ENCODE measurements at regions of chr2 and their contacts with region 1.

Region 1: GRCh38 chr2:157327621-157328500 is 2.2 kb upstream of the ERMN start:
- DNase-seq: peak; percentile 75 to 83 (median 78)
- H3K4me3 ChIP-seq: peak overlapping the region in 1 of 2 donors; percentile 13
- H3K4me3 Mint-ChIP-seq: peak overlapping the region in 7 of 8 donors; percentile 63 to 75 (median 70)
- H3K27ac ChIP-seq: no peak overlapping the region
- H3K27ac Mint-ChIP-seq: peak overlapping the region; percentile 27 to 91 (median 82)
- H3K4me1 ChIP-seq: peaks cover 42% of the 10 kb centered on the region
- H3K4me1 Mint-ChIP-seq: peaks cover 34 to 49% (median 40%) of the 10 kb centered on the region in 4 donors
- H3K27me3 ChIP-seq: no peaks in the 10 kb centered on the region
- H3K27me3 Mint-ChIP-seq: no peaks in the 10 kb centered on the region

Region 2: GRCh38 chr2:157261199-157261783 is 66.6 kb before region 1 on chr2:
- CTCF ChIA-PET with region 1: no interaction called
- POLR2A ChIA-PET with region 1: no interaction called
- intact Hi-C with region 1: no loop called
- DNase-seq: peak in 1 of 5 donors; percentile 34
- H3K4me3 ChIP-seq: no peak overlapping the region
- H3K4me3 Mint-ChIP-seq: peak overlapping the region in 7 of 8 donors; percentile 9 to 70 (median 42)
- H3K27ac ChIP-seq: no peak overlapping the region
- H3K27ac Mint-ChIP-seq: peak overlapping the region in 2 of 7 donors; percentile 53
- H3K4me1 ChIP-seq: no peaks in the 10 kb centered on the region
- H3K4me1 Mint-ChIP-seq: peaks cover 7 to 13% (median 9%) of the 10 kb centered on the region in 4 donors
- H3K27me3 ChIP-seq: no peaks in the 10 kb centered on the region
- H3K27me3 Mint-ChIP-seq: no peaks in the 10 kb centered on the region

Region 3: DNA sequence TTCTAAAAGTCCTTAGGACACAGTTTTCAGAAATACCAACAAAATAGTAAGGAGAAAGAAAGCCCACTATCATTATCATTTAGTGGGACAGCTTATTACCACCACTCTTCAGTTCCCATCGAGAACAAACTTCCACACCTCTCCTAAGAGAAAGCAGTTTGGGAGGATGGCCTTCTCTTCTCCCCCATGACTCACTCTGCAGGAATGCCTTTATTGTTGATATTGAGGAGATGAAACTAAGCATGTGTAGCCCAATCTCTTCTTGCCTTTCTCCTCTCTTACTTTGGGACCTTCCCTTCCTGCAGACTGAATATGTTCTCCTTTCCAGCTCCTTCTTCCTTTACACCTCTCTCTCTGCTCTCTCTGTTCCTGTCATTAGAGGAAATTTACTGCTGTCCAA is 27.8 kb after region 1 on chr2:
- CTCF ChIA-PET with region 1: interaction called, 202 read pairs
- POLR2A ChIA-PET with region 1: no interaction called
- intact Hi-C with region 1: no loop called
- DNase-seq: no peak
- H3K4me3 ChIP-seq: no peak overlapping the region
- H3K4me3 Mint-ChIP-seq: peak overlapping the region in 1 of 8 donors; percentile 16
- H3K27ac ChIP-seq: no peak overlapping the region
- H3K27ac Mint-ChIP-seq: peak overlapping the region in 4 of 7 donors; percentile 2 to 36 (median 14)
- H3K4me1 ChIP-seq: no peaks in the 10 kb centered on the region
- H3K4me1 Mint-ChIP-seq: peaks cover 15 to 38% (median 17%) of the 10 kb centered on the region in 4 donors
- H3K27me3 ChIP-seq: no peaks in the 10 kb centered on the region
- H3K27me3 Mint-ChIP-seq: no peaks in the 10 kb centered on the region

Region 4: GRCh38 chr2:157420771-157421323 is 93.0 kb after region 1 on chr2:
- CTCF ChIA-PET with region 1: interaction called, 63 read pairs
- POLR2A ChIA-PET with region 1: interaction called, 9 read pairs
- intact Hi-C with region 1: no loop called
- DNase-seq: peak in 1 of 5 donors; percentile 29
- H3K4me3 ChIP-seq: no peak overlapping the region
- H3K4me3 Mint-ChIP-seq: peak overlapping the region in 7 of 8 donors; percentile 31 to 82 (median 52)
- H3K27ac ChIP-seq: peak overlapping the region; percentile 36
- H3K27ac Mint-ChIP-seq: peak overlapping the region; percentile 83 to 97 (median 92)
- H3K4me1 ChIP-seq: peaks cover 87% of the 10 kb centered on the region
- H3K4me1 Mint-ChIP-seq: peaks cover 54 to 76% (median 67%) of the 10 kb centered on the region in 4 donors
- H3K27me3 ChIP-seq: no peaks in the 10 kb centered on the region
- H3K27me3 Mint-ChIP-seq: no peaks in the 10 kb centered on the region

Region 5: DNA sequence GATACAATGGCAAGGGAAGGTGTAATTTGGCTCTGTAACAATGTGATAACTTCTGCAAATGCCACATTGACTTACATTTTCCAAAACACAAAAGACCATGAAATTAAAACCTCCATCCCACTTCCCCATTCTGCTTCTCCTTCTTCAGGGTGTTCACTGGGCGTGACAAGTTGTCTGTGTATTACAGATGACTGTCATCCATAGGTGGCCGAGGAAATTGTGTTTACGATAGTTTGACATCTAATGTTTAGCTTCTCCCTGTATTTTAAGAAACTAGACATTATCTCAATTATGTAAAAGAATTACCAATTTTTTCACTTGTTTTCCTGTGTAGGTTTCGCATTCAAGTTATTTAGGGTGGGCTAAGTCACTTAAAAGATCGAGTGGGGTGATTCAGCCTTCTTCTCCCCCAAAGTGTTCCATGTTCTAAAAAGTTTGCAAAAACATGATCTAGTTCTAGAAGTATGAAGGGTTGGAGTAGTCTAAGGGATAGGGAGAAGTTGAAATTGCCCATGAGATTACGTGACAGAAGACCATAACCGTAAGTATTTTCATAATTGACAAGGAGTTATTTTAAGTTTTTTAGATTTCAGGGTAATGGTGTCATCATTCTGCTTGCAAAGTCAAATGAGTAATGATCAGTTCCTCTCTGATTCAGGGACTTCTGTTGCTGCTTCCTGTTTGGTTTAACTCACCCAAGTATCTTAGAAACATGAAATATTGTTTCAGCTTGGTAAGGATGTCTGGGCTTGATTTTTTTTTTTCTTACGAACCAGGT is 141.3 kb after region 1 on chr2:
- CTCF ChIA-PET with region 1: interaction called, 392 read pairs
- POLR2A ChIA-PET with region 1: interaction called, 9 read pairs
- intact Hi-C with region 1: no loop called
- DNase-seq: peak; percentile 45 to 80 (median 70)
- H3K4me3 ChIP-seq: peak overlapping the region in 1 of 2 donors; percentile 50
- H3K4me3 Mint-ChIP-seq: peak overlapping the region; percentile 49 to 83 (median 69)
- H3K27ac ChIP-seq: peak overlapping the region; percentile 71
- H3K27ac Mint-ChIP-seq: peak overlapping the region; percentile 93 to 99 (median 98)
- H3K4me1 ChIP-seq: peaks cover 49% of the 10 kb centered on the region
- H3K4me1 Mint-ChIP-seq: peaks cover 49 to 78% (median 60%) of the 10 kb centered on the region in 4 donors
- H3K27me3 ChIP-seq: no peaks in the 10 kb centered on the region
- H3K27me3 Mint-ChIP-seq: no peaks in the 10 kb centered on the region

Region 6: DNA sequence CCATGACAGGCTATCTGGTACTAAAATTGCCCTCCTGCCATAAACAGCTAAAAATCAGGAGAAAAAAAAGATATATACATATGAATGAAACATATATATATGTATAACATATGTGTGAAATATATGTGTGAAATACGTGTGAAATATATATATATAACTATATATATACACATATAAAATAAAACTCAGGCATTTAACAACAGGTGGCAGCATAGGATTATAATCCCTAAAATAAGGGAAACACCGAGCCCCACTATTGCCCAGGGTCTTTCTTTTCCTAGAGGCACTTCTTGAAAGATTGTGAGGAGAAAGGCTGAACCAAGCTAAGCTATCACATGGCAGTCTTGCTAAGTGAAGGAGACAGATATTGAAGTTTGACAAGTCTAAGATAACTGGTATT is 181.9 kb after region 1 on chr2:
- CTCF ChIA-PET with region 1: interaction called, 11 read pairs
- POLR2A ChIA-PET with region 1: no interaction called
- intact Hi-C with region 1: no loop called
- DNase-seq: no peak
- H3K4me3 ChIP-seq: no peak overlapping the region
- H3K4me3 Mint-ChIP-seq: no peak overlapping the region
- H3K27ac ChIP-seq: no peak overlapping the region
- H3K27ac Mint-ChIP-seq: no peak overlapping the region
- H3K4me1 ChIP-seq: no peaks in the 10 kb centered on the region
- H3K4me1 Mint-ChIP-seq: peaks cover 0 to 4% (median 0%) of the 10 kb centered on the region in 4 donors
- H3K27me3 ChIP-seq: peaks cover 4% of the 10 kb centered on the region
- H3K27me3 Mint-ChIP-seq: peaks cover 13 to 17% of the 10 kb centered on the region in 2 donors

Region 7: GRCh38 chr2:158006961-158007719 is 679.3 kb after region 1 on chr2:
- CTCF ChIA-PET with region 1: interaction called, 5 read pairs
- POLR2A ChIA-PET with region 1: interaction called, 3 read pairs
- intact Hi-C with region 1: loop called (anchors 1 kb)
- DNase-seq: no peak
- H3K4me3 ChIP-seq: no peak overlapping the region
- H3K4me3 Mint-ChIP-seq: no peak overlapping the region
- H3K27ac ChIP-seq: no peak overlapping the region
- H3K27ac Mint-ChIP-seq: peak overlapping the region in 1 of 7 donors; percentile 15
- H3K4me1 ChIP-seq: no peaks in the 10 kb centered on the region
- H3K4me1 Mint-ChIP-seq: peaks cover 3 to 6% (median 5%) of the 10 kb centered on the region in 4 donors
- H3K27me3 ChIP-seq: no peaks in the 10 kb centered on the region
- H3K27me3 Mint-ChIP-seq: peaks cover 1 to 6% of the 10 kb centered on the region in 2 donors

Measured in CD4-positive, alpha-beta memory T cell (primary cell).